Heart left ventricle (tissue), 16 donors: ENCODE measurements at regions of chr3 and their contacts with region 1.

Region 1: GRCh38 chr3:12796171-12797123 is at the start of gene CAND2:
- DNase-seq: peak; percentile 73 to 90 (median 81)
- ATAC-seq: peak; percentile 51 to 89 (median 87)
- H3K4me3 ChIP-seq: peak within 1 kb of the TSS; percentile 48 to 86 (median 66)
- H3K27ac ChIP-seq: peak within 1 kb of the TSS; percentile 50 to 97 (median 89)
- H3K4me1 ChIP-seq: peaks cover 0 to 54% (median 9%) of the 10 kb centered on the region in 12 donors
- H3K27me3 ChIP-seq: no peaks in the 10 kb centered on the region
- CTCF ChIP-seq: no peak
- POLR2A ChIP-seq: peak; percentile 20 to 49
- total RNA-seq, gene CAND2: 44.6 to 87.5 (median 68.6) TPM

Region 2: DNA sequence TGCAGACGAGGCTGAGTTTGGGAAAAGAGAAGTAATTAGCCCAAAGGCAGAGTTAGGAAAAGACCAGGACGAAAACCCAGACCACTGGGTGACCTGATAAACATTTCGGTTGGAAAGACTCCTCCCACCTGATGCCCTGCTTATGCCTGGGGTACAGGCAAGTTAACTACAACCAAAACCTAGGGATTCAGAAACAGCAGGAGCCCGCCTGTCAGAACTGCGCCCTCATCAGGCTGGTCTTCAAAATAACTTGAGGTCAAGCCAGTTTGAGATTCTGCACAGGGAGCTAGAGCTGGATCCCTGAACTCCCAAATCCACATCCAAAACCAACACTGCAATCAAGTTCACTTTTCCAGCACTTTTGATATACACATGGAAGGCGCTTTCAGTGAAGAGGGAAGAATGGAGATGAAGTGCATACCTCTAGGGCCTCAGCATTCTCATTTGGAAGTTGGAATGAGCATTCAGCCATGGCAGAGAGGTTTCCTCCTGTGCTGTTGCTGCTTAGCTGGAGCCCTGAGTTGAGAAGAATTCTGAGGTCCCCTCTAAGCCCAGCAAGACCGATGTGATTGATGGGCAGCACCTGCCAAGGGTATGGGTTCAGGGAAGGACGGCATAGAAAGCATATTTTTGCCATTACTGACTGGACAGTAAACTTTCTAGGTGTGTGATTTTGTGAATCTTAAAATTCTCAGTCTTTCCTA is 300.5 kb before region 1 on chr3:
- intact Hi-C with region 1: loop called in 1 of 10 experiments (anchors 10 kb)
- DNase-seq: no peak
- ATAC-seq: no peak
- H3K4me3 ChIP-seq: no peak overlapping the region
- H3K27ac ChIP-seq: no peak overlapping the region
- H3K4me1 ChIP-seq: no peaks in the 10 kb centered on the region
- H3K27me3 ChIP-seq: no peaks in the 10 kb centered on the region
- CTCF ChIP-seq: no peak
- POLR2A ChIP-seq: no peak

Region 3: DNA sequence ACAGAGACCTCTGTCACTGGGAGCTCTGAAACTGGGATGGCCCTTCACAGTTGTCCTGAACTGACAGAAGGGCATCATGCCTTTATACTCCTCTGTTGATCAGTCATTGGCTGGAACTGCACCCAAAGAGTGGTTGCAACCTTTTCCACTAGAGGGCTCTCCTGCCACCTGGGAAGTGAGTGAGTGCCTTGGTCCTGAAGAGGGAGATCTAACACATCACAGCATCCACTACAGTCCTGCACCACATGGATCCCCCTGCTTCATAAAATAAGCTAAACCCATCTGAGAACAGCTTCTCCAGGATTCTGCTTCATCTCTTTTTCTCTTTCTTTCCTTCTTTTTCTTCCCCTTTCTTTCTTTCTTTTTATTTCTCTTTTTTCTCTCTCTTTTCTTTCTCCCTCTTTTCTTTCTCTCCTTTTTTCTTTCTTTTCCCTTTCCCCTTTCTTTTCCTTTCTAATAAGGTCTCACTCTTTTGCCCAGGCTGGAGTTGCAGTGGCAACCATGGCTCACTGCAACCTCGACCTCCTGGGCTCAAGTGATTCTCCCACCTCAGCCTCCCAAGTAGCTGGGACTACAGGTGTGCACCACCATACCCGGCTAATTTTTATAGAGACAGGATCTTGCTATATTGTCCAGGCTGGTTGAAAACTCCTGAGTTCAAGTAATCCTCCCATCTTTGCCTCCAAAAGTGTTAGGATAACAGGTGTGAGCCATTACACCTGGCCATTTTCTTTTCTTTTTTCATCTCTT is 89.8 kb before region 1 on chr3:
- intact Hi-C with region 1: loop called in 3 of 10 experiments (anchors 10 kb)
- DNase-seq: peak in 4 of 5 donors; percentile 39 to 65 (median 45)
- ATAC-seq: peak in 3 of 4 donors; percentile 85 to 89 (median 87)
- H3K4me3 ChIP-seq: no peak overlapping the region
- H3K27ac ChIP-seq: no peak overlapping the region
- H3K4me1 ChIP-seq: peaks cover 0 to 22% (median 5%) of the 10 kb centered on the region in 12 donors
- H3K27me3 ChIP-seq: peaks cover 0 to 4% (median 0%) of the 10 kb centered on the region in 9 donors
- CTCF ChIP-seq: peak; percentile 43 to 77 (median 65)
- POLR2A ChIP-seq: no peak

Region 4: GRCh38 chr3:12741209-12741608 is 55.2 kb before region 1 on chr3:
- intact Hi-C with region 1: no loop called
- DNase-seq: peak in 2 of 5 donors; percentile 35 to 66
- ATAC-seq: peak; percentile 76 to 86 (median 80)
- H3K4me3 ChIP-seq: no peak overlapping the region
- H3K27ac ChIP-seq: peak overlapping the region in 9 of 12 donors; percentile 5 to 66 (median 40)
- H3K4me1 ChIP-seq: peaks cover 0 to 16% (median 1%) of the 10 kb centered on the region in 12 donors
- H3K27me3 ChIP-seq: no peaks in the 10 kb centered on the region
- CTCF ChIP-seq: no peak
- POLR2A ChIP-seq: no peak

Region 5: DNA sequence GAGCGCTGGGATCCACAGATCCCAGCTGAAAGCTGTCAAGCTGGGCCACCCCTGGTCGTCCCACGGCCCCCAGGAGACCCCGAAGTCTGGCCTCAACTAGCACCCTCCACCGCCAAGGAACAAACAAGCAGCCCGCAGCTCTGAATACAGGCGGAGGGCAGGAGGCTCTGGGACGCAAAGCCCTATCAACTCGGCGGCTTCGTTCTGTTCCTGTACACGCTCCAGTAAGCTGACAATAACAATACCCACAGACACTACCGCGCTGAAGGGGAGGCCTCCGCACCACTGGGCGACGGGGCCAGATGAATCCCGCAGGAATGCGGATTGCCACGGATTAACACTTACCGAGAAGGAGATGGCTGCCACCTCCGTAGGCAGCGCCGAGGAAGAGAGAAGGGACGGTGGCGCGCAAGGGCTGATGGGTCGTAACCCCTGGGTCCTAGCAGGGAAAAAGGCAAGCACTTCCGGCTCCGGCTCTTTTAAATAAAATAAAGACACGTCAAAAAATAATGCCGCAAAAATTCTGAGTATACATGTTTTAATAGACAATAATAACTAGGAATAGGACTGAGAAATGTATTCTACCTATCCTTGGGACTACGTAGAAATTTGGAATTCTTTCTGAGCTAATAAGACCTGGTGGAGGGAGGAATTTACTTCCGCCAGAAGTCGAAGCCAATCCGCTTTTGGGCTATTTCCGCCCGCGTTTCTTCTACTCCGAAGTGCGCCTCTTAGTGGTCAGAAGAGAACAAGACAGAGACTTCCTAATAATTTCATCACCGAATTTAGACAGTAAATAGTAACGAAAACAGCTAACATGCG is 44.9 kb after region 1 on chr3 and contains the start of gene RPL32:
- intact Hi-C with region 1: loop called in 1 of 10 experiments (anchors 5 kb)
- DNase-seq: peak; percentile 88 to 92 (median 90)
- ATAC-seq: peak; percentile 92 to 98 (median 96)
- H3K4me3 ChIP-seq: peak within 1 kb of the TSS; percentile 33 to 89 (median 70)
- H3K27ac ChIP-seq: peak within 1 kb of the TSS; percentile 82 to 97 (median 92)
- H3K4me1 ChIP-seq: peaks cover 0 to 45% (median 29%) of the 10 kb centered on the region in 12 donors
- H3K27me3 ChIP-seq: no peaks in the 10 kb centered on the region
- CTCF ChIP-seq: peak; percentile 75 to 93 (median 86)
- POLR2A ChIP-seq: peak in 1 of 2 donors; percentile 79
- total RNA-seq, gene RPL32: 377 to 1,128 (median 947) TPM

Region 6: DNA sequence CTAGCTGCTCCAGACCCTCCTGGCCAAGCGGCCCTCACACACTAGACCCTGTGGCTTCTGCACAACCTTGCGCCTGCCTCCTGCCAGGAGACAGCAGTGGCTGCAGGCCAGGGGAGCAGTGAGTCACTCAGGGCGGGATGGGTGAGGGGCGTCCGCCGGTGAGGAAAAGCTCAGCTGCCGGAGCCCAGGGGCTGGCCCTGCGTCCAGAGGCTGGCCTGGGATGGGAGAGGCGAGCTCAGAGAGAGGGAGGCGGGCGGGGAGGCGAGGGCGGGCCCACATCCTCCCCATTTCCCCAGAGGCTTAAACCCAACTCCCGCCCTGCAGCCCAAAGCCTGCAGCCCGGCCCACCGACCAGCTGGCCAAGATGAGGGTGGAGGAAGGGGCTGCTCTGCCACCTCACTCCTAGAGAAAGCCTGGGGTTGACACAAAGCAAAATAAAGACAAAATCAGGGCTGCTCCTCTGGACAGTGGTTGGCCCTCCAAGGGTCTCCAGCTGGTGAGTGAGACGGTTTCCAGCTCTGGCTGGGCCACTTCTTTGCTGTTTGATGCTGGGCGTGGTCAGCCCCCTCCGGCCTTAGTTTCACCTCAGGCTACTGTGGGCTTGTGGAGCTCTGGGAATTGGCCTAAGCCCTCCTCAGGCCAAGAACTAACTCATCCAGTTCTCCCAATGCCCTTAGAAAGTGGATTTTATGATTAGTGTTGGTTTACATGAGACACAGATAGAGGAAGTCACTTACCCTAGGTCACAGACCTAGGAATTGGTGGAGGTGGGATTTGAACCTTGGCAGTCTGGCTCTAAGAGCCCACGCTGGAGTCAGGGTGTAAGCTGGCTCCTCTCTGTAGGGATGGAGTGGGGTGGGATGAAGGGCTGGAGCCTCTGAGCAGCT is 226.1 kb after region 1 on chr3:
- intact Hi-C with region 1: no loop called
- DNase-seq: peak; percentile 86 to 92 (median 90)
- ATAC-seq: peak; percentile 60 to 86 (median 76)
- H3K4me3 ChIP-seq: peak overlapping the region in 10 of 12 donors; percentile 18 to 56 (median 41)
- H3K27ac ChIP-seq: peak overlapping the region; percentile 23 to 87 (median 70)
- H3K4me1 ChIP-seq: peaks cover 0 to 67% (median 56%) of the 10 kb centered on the region in 12 donors
- H3K27me3 ChIP-seq: no peaks in the 10 kb centered on the region
- CTCF ChIP-seq: no peak
- POLR2A ChIP-seq: no peak